OCI-LY7 (cell line): ENCODE measurements at regions of chr1 and their contacts with region 1.

Region 1: GRCh38 chr1:17661546-17662157 is 93.5 kb upstream of the ACTL8 start:
- DNase-seq: peak; percentile 55
- H3K4me3 ChIP-seq: no peak overlapping the region
- H3K27ac ChIP-seq: no peak overlapping the region
- H3K4me1 ChIP-seq: no peaks in the 10 kb centered on the region
- CTCF ChIP-seq: peak; percentile 95

Region 2: GRCh38 chr1:17574516-17574915 is 87.1 kb before region 1 on chr1:
- CTCF ChIA-PET with region 1: no interaction called
- POLR2A ChIA-PET with region 1: no interaction called
- intact Hi-C with region 1: no loop called
- DNase-seq: no peak
- H3K4me3 ChIP-seq: no peak overlapping the region
- H3K27ac ChIP-seq: no peak overlapping the region
- H3K4me1 ChIP-seq: no peaks in the 10 kb centered on the region
- CTCF ChIP-seq: 0 out of 2 replicates have a peak, but pooled peaks have one; percentile 13

Region 3: GRCh38 chr1:17635811-17636210 is 25.8 kb before region 1 on chr1:
- CTCF ChIA-PET with region 1: no interaction called
- POLR2A ChIA-PET with region 1: no interaction called
- intact Hi-C with region 1: no loop called
- DNase-seq: peak; percentile 61
- H3K4me3 ChIP-seq: no peak overlapping the region
- H3K27ac ChIP-seq: no peak overlapping the region
- H3K4me1 ChIP-seq: peaks cover 16% of the 10 kb centered on the region
- CTCF ChIP-seq: no peak

Region 4: DNA sequence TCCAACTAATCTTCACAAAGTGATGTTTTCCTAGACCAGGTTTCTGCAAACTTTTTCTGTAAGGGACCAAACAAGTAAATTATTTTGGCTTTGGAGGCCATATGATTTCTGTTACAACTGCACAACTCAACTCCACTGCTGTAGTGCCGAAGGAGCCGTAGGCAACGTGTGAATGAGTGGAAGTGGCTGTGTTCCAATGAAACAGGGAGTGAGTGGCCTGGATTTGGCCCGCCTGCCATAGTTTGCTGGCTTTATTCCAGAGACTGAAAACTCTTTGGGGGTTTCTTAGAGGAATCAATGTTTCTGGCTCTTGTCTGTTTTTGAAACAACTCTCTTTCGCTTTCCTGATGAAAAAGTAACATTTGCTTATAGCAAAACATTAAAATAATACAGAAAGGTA is 80.9 kb after region 1 on chr1:
- CTCF ChIA-PET with region 1: no interaction called
- POLR2A ChIA-PET with region 1: no interaction called
- intact Hi-C with region 1: loop called (anchors 10 kb)
- DNase-seq: no peak
- H3K4me3 ChIP-seq: no peak overlapping the region
- H3K27ac ChIP-seq: no peak overlapping the region
- H3K4me1 ChIP-seq: no peaks in the 10 kb centered on the region
- CTCF ChIP-seq: no peak

Region 5: GRCh38 chr1:17826165-17826488 is 164.5 kb after region 1 on chr1:
- CTCF ChIA-PET with region 1: no interaction called
- POLR2A ChIA-PET with region 1: no interaction called
- intact Hi-C with region 1: loop called (anchors 2 kb)
- DNase-seq: peak; percentile 46
- H3K4me3 ChIP-seq: no peak overlapping the region
- H3K27ac ChIP-seq: no peak overlapping the region
- H3K4me1 ChIP-seq: no peaks in the 10 kb centered on the region
- CTCF ChIP-seq: peak; percentile 79

Region 6: DNA sequence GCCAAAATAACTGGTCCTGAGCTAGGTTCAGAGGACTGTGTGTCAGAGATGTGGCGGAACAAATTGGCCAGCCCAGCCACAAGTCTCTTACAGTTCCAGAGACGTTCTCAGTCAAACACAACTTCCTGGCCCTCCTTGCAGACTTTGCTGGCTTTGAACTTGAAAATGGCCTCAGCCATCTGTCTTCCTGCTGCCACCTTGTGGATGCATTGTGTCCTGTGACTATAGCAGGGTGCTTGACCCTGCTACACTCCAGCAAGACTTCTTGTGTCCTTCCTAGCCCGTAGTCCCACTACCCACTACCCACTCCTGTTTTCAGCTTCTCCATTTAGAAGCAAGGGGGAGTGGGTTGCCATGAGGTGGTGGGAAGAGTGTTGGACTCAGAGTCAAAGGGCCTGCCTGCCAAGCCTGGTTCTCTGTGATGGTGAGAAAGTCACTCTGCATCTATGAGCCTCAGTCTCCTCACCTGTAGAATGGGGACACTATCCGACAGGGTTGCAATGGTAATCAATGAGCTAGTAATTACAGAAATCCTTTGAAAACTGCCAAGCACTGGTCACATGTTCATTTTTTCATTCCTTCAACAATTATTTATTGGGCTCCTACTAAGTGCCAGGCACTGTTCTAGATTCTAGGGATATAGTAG is 555.9 kb after region 1 on chr1:
- CTCF ChIA-PET with region 1: no interaction called
- POLR2A ChIA-PET with region 1: no interaction called
- intact Hi-C with region 1: loop called (anchors 10 kb)
- DNase-seq: peak; percentile 67
- H3K4me3 ChIP-seq: no peak overlapping the region
- H3K27ac ChIP-seq: no peak overlapping the region
- H3K4me1 ChIP-seq: no peaks in the 10 kb centered on the region
- CTCF ChIP-seq: peak; percentile 83